ENCODE measurements at regions of chr9 and their contacts with region 1.

Region 1: GRCh38 chr9:87678650-87679515 is 47.0 kb upstream of the CTSL start:
- DNase-seq: peak in 1 of 2 donors; percentile 69
- ATAC-seq: peak in 1 of 3 donors; percentile 39
- H3K4me3 ChIP-seq: no peak overlapping the region
- H3K4me3 Mint-ChIP-seq: no peak overlapping the region
- H3K27ac ChIP-seq: no peak overlapping the region
- H3K27ac Mint-ChIP-seq: no peak overlapping the region
- H3K4me1 ChIP-seq: no peaks in the 10 kb centered on the region
- H3K4me1 Mint-ChIP-seq: no peaks in the 10 kb centered on the region
- H3K27me3 ChIP-seq: no peaks in the 10 kb centered on the region
- H3K27me3 Mint-ChIP-seq: no peaks in the 10 kb centered on the region
- CTCF ChIP-seq: peak; percentile 52

Region 2: GRCh38 chr9:87812375-87813118 is 133.7 kb after region 1 on chr9:
- intact Hi-C with region 1: loop called (anchors 2 kb)
- DNase-seq: peak in 1 of 2 donors; percentile 26
- ATAC-seq: no peak
- H3K4me3 ChIP-seq: no peak overlapping the region
- H3K4me3 Mint-ChIP-seq: no peak overlapping the region
- H3K27ac ChIP-seq: no peak overlapping the region
- H3K27ac Mint-ChIP-seq: no peak overlapping the region
- H3K4me1 ChIP-seq: no peaks in the 10 kb centered on the region
- H3K4me1 Mint-ChIP-seq: no peaks in the 10 kb centered on the region
- H3K27me3 ChIP-seq: no peaks in the 10 kb centered on the region
- H3K27me3 Mint-ChIP-seq: peaks cover 0 to 17% of the 10 kb centered on the region in 2 donors
- CTCF ChIP-seq: peak; percentile 33

Measured in natural killer cell (primary cell).